Heart right ventricle (tissue), 16 donors: ENCODE measurements at regions of chrX and their contacts with region 1.

Region 1: DNA sequence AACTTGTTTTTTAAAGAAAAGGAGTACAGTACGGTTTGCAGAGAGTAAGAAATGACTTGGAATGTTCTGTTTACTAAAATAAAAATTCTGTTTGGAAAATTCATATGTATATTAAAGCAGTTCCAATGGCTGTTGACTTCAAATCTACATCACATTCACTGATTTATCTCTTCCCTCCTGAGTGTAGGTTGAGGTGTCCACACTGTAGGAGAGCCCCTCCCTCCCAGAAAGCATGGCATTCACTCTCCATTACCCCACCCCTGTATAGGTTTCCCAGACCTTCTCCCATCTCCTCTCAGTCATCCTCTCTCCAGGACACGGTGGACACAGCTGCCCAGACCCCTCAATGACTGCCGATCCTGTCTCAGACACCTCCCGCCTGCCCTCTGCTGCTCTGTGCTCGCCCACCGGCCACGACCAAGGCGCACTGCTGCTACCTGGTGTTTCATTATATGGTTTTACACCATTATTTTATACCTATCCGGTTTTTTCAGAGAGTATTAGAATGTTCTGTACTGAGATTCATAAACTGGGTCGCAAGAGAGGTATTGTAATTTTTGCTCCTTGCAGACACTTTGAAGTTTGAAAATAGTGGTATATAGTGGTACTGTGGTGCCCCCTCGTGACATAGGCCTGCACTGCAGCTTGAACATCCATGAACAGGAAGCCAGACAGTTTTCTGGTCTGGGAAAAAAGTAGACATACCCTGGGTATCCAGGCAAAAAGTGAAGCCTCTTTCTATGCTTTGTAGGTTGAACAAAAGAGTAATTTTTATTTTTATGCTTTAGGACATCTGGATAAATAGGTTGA is 38.8 kb upstream of the BEX4 start:
- DNase-seq: peak; percentile 5 to 26
- ATAC-seq: peak in 1 of 8 donors; percentile 47
- H3K4me3 ChIP-seq: no peak overlapping the region
- H3K27ac ChIP-seq: no peak overlapping the region
- H3K4me1 ChIP-seq: no peaks in the 10 kb centered on the region
- H3K27me3 ChIP-seq: peaks cover 0 to 57% (median 0%) of the 10 kb centered on the region in 7 donors
- CTCF ChIP-seq: peak; percentile 34 to 79 (median 69)

Region 2: GRCh38 chrX:101415180-101416145 is 1760.7 kb before region 1 on chrX:
- intact Hi-C with region 1: loop called in 1 of 10 experiments (anchors 5 kb)
- DNase-seq: peak in 1 of 2 donors; percentile 24
- ATAC-seq: peak in 5 of 8 donors; percentile 19 to 50 (median 31)
- H3K4me3 ChIP-seq: no peak overlapping the region
- H3K27ac ChIP-seq: peak overlapping the region in 7 of 10 donors; percentile 6 to 75 (median 66)
- H3K4me1 ChIP-seq: peaks cover 0 to 50% (median 18%) of the 10 kb centered on the region in 9 donors
- H3K27me3 ChIP-seq: peaks cover 0 to 45% (median 0%) of the 10 kb centered on the region in 7 donors
- CTCF ChIP-seq: peak; percentile 55 to 85 (median 68)

Region 3: DNA sequence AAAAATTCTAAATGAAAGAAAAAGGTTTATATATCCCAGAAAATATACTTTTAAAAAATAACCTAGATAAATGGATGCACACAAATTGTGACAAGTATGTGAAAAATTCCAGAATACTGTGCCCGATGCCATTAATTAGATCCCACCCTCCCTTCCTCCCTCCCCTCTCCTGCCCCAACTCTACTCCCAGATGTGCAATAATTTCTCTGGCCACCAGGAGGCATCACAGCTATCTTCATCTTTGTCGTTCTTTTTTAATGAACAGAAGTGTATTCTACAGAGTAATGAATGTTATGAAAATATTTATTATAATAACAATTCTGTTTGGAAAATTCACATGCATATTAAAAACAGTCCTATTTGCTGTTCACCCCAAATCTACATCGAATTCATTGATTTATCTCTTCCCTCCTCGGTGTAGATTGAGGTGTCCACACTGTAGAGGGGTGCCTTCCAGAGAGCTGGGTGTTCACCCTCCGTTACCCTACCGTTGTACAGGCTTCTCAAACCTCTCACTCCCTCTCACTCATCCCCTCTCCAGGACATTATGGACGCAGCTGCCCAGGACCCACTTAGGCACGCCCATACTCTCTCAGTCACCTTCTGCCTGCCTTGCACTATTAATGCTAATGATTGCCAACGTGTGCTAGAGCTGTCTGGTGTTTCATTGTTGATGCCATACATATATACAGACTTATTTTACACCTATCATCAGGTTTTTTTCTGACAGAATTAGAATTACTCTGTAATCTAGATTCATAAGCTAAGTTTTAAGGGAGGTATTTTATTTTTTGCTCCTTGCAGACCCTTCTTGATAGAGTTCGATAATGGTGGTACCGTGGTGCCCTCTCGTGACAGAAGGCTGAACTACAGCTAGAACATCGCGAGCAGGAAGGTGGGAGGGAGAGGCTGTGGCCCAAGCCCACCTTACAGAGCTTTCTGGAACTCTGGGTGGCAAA is 225.0 kb before region 1 on chrX:
- intact Hi-C with region 1: loop called in 7 of 10 experiments (anchors 5 to 10 kb)
- DNase-seq: peak in 1 of 2 donors; percentile 26
- ATAC-seq: peak in 2 of 8 donors; percentile 39 to 57
- H3K4me3 ChIP-seq: peak overlapping the region in 4 of 10 donors; percentile 8 to 22 (median 18)
- H3K27ac ChIP-seq: no peak overlapping the region
- H3K4me1 ChIP-seq: no peaks in the 10 kb centered on the region
- H3K27me3 ChIP-seq: peaks cover 0 to 38% (median 0%) of the 10 kb centered on the region in 7 donors
- CTCF ChIP-seq: peak; percentile 16 to 67 (median 55)